CD14-positive monocyte (primary cell): ENCODE measurements at regions of chr5 and their contacts with region 1.

Region 1: DNA sequence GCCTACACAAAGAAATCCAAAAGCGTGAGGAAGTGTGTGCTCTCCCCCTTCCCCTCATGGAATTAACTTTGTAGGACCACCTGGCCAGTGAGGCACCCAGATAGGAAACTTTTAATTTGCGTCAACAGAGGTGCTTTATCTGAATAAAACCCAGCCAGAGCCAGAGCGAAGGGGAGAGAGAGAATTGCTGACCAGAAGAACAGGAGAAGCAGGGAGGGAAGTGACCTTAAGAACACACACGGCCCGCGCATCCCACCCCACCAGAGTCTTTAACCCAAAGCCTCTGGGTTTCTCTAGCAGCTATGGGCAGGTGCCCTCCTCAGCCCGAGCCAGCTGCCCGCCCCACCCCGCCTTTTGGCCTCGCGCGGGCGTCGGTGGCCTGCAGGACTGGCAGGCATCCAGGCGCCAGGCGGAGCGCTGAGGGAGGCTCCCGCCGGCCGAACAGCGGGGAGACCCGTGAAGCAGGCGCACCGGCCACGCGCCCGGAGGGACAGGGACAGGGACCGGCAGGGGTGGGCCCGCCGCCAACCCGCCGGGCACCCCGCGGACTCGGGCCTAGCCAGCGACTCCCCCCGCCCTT is 580 bp downstream of the ERAP1 start:
- DNase-seq: peak; percentile 36 to 48 (median 47)
- H3K4me3 ChIP-seq: peak overlapping the region; percentile 78 to 88 (median 88)
- H3K4me3 Mint-ChIP-seq: peak overlapping the region; percentile 89 to 95
- H3K27ac ChIP-seq: peak overlapping the region; percentile 97
- H3K27ac Mint-ChIP-seq: peak overlapping the region; percentile 92 to 100 (median 98)
- H3K4me1 ChIP-seq: peaks cover 29 to 39% of the 10 kb centered on the region in 2 donors
- H3K4me1 Mint-ChIP-seq: peaks cover 46% of the 10 kb centered on the region
- H3K27me3 ChIP-seq: no peaks in the 10 kb centered on the region
- H3K27me3 Mint-ChIP-seq: peaks cover 0 to 3% (median 0%) of the 10 kb centered on the region in 3 donors
- CTCF ChIP-seq: no peak

Region 2: DNA sequence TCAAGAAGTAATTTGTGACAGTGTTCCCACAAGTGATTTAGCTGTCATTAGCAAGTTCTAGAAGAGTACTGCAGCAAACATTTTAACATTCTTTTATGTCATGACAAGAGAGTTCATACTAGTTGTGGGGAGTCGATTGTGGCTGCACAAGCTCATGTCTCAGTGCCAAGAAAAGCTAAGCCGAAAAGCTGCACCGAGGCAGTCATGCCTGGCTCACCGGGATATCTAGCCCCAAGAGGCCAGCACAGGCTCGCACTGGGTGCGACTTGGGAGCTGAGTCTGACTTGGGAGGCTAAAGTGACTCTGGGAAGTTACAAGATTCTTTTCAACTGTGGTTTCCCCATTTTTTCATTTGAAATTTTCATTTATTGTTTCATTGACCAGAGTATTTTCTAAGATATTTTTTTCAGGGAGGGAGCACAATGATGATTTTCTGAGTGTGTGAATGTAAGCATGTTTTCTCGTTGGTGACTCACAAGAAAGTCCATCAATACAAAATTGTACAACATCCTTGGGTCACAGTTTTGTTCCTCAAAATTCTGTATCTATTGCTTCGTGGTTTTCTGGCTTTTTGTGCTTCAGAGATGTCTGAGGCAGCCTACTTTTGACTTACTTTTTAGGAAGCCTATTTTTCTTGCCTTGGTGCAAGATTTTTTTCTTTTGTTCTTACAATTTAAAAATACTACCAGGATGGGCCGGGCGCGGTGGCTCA is 126.2 kb before region 1 on chr5:
- intact Hi-C with region 1: no loop called
- DNase-seq: peak; percentile 31 to 68 (median 35)
- H3K4me3 ChIP-seq: no peak overlapping the region
- H3K4me3 Mint-ChIP-seq: no peak overlapping the region
- H3K27ac ChIP-seq: peak overlapping the region; percentile 14 to 46
- H3K27ac Mint-ChIP-seq: peak overlapping the region; percentile 58 to 79 (median 68)
- H3K4me1 ChIP-seq: peaks cover 4 to 19% of the 10 kb centered on the region in 2 donors
- H3K4me1 Mint-ChIP-seq: peaks cover 25% of the 10 kb centered on the region
- H3K27me3 ChIP-seq: no peaks in the 10 kb centered on the region
- H3K27me3 Mint-ChIP-seq: peaks cover 0 to 2% (median 0%) of the 10 kb centered on the region in 3 donors
- CTCF ChIP-seq: no peak

Region 3: GRCh38 chr5:96752341-96753016 is 54.7 kb before region 1 on chr5:
- intact Hi-C with region 1: no loop called
- DNase-seq: peak; percentile 30 to 71 (median 48)
- H3K4me3 ChIP-seq: no peak overlapping the region
- H3K4me3 Mint-ChIP-seq: no peak overlapping the region
- H3K27ac ChIP-seq: peak overlapping the region in 1 of 2 donors; percentile 39
- H3K27ac Mint-ChIP-seq: peak overlapping the region in 2 of 7 donors; percentile 18 to 39
- H3K4me1 ChIP-seq: no peaks in the 10 kb centered on the region
- H3K4me1 Mint-ChIP-seq: no peaks in the 10 kb centered on the region
- H3K27me3 ChIP-seq: no peaks in the 10 kb centered on the region
- H3K27me3 Mint-ChIP-seq: peaks cover 0 to 2% (median 1%) of the 10 kb centered on the region in 3 donors
- CTCF ChIP-seq: peak; percentile 80

Region 4: DNA sequence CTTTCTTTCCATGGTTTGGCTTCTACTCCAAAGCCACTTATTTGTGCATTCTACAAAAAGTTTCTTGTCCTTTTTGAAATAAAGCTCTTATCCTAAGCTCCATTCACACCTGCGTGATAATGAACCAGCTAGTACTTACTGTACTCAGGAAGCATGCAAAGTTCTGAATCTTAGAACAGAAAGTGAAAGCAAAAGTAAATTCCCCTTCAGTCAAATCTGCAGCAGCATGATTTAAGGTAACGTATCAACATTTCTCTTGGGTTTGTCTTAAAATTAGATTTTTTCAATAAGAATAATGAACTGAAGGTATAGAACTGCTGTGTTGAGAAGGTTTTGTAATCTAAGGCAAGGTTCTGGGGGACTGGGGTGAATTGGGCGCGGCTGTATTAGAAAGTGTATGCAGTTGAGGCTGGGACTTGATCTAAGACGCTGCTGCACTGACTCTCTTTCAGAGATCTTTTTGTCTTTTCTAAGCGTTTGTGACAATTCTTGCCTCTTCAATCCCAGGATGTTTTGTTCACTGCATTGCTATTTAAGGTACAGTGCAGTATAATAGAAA is 69.2 kb after region 1 on chr5 and contains the start of gene ERAP2:
- intact Hi-C with region 1: loop called in 1 of 2 experiments (anchors 5 kb)
- DNase-seq: peak; percentile 17 to 57 (median 36)
- H3K4me3 ChIP-seq: peak within 1 kb of the TSS; percentile 86 to 100 (median 93)
- H3K4me3 Mint-ChIP-seq: peak within 1 kb of the TSS; percentile 88 to 97
- H3K27ac ChIP-seq: peak within 1 kb of the TSS; percentile 19 to 84
- H3K27ac Mint-ChIP-seq: peak within 1 kb of the TSS; percentile 89 to 96 (median 91)
- H3K4me1 ChIP-seq: peaks cover 29 to 39% of the 10 kb centered on the region in 2 donors
- H3K4me1 Mint-ChIP-seq: peaks cover 35% of the 10 kb centered on the region
- H3K27me3 ChIP-seq: no peaks in the 10 kb centered on the region
- H3K27me3 Mint-ChIP-seq: peaks cover 0 to 4% (median 0%) of the 10 kb centered on the region in 3 donors
- CTCF ChIP-seq: no peak
- polyA plus RNA-seq, gene ERAP2: 3.0 to 20.4 (median 3.4) TPM

Region 5: DNA sequence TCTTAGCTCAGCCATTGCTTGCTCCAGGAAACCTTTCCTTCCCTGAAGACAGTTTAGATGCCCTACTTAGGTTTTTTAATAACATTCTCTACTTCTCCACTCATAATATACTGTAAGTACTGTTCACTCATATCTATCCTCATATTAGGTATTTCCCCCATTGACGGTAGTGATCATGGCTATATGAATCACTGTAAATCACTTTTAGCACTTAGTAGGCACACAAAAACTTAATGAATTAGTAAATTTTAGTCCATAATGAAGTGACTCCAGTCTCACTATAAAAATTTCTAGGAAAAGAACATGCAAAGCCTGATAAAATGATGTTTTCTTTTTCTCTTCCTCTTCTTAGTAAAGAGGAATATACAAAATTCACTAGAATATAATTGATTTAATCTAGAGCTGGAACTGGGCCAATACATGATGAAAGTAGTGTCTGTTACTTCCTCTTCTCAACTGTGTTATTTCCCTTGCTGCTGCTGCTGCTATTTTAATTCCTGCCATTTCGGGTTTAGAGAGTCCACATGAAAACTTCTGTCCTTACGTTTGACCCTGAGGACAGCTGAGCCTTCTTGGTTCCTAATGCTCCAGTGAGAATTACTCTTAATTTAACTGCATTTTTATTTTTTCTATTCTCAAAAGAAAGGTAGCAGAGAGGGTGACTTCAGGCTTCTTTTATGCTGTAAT is 202.2 kb after region 1 on chr5:
- intact Hi-C with region 1: no loop called
- DNase-seq: peak; percentile 75 to 81 (median 77)
- H3K4me3 ChIP-seq: peak overlapping the region in 1 of 3 experiments; percentile 36
- H3K4me3 Mint-ChIP-seq: peak overlapping the region; percentile 52 to 65
- H3K27ac ChIP-seq: peak overlapping the region in 1 of 2 donors; percentile 60
- H3K27ac Mint-ChIP-seq: peak overlapping the region; percentile 59 to 92 (median 85)
- H3K4me1 ChIP-seq: peaks cover 21 to 22% of the 10 kb centered on the region in 2 donors
- H3K4me1 Mint-ChIP-seq: peaks cover 24% of the 10 kb centered on the region
- H3K27me3 ChIP-seq: no peaks in the 10 kb centered on the region
- H3K27me3 Mint-ChIP-seq: no peaks in the 10 kb centered on the region
- CTCF ChIP-seq: no peak

Region 6: GRCh38 chr5:97183100-97183929 is 376.1 kb after region 1 on chr5 and contains the start of gene RIOK2:
- intact Hi-C with region 1: loop called in 1 of 2 experiments (anchors 5 kb)
- DNase-seq: peak; percentile 90 to 91 (median 90)
- H3K4me3 ChIP-seq: peak within 1 kb of the TSS; percentile 94 to 97 (median 94)
- H3K4me3 Mint-ChIP-seq: peak within 1 kb of the TSS; percentile 98
- H3K27ac ChIP-seq: peak within 1 kb of the TSS; percentile 93 to 99
- H3K27ac Mint-ChIP-seq: peak within 1 kb of the TSS; percentile 98 to 99 (median 99)
- H3K4me1 ChIP-seq: peaks cover 21% of the 10 kb centered on the region in 2 donors
- H3K4me1 Mint-ChIP-seq: peaks cover 35% of the 10 kb centered on the region
- H3K27me3 ChIP-seq: no peaks in the 10 kb centered on the region
- H3K27me3 Mint-ChIP-seq: peaks cover 1 to 5% (median 1%) of the 10 kb centered on the region in 3 donors
- CTCF ChIP-seq: no peak
- polyA plus RNA-seq, gene RIOK2: 4.8 to 16.4 (median 12.7) TPM